BJ (cell line): ENCODE measurements at regions of chr9 and their contacts with region 1.

Region 1: GRCh38 chr9:125558453-125559092 is 148.4 kb downstream of the MAPKAP1 start:
- DNase-seq: no peak
- H3K4me3 ChIP-seq: no peak overlapping the region
- H3K27me3 ChIP-seq: no peaks in the 10 kb centered on the region
- CTCF ChIP-seq: peak; percentile 83

Region 2: GRCh38 chr9:125472926-125473701 is 85.5 kb before region 1 on chr9:
- CTCF ChIA-PET with region 1: interaction called, 3 read pairs
- POLR2A ChIA-PET with region 1: interaction called, 10 read pairs
- DNase-seq: no peak
- H3K4me3 ChIP-seq: no peak overlapping the region
- H3K27me3 ChIP-seq: no peaks in the 10 kb centered on the region
- CTCF ChIP-seq: peak; percentile 27; the same call in 1 of the 2 replicates

Region 3: DNA sequence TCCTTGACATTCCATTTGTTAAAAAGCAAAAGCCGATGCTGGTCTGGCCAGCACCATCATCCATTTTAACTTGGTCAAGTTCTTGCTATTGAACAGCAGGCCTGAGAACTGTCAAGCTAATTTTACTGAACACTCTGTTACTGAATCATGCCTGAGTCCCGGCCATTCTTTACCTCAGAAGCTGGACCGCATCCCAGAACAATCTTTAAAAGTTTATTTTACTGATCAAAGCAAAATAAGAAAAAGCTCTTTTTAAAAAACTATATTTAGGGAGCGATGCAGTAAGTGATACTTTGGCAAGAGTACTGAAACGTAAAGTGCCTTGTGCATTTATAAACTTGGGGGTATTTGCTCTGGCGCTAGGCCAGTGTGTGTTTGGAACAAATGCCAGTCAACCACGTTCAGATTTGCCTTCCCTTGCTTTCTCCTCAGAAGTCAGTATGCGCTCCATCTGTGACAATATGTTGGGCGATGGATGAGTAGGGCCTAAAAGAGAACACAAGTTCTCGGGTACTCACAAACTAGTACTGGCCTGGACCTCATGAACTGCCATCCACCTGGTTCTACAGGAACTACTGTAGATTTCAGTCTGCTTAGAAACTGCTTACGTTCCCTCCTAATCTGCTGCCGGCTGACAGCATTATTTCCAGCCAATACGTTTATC is 13.5 kb before region 1 on chr9:
- CTCF ChIA-PET with region 1: interaction called, 18 read pairs
- POLR2A ChIA-PET with region 1: no interaction called
- DNase-seq: peak; percentile 44
- H3K4me3 ChIP-seq: no peak overlapping the region
- H3K27me3 ChIP-seq: no peaks in the 10 kb centered on the region
- CTCF ChIP-seq: no peak